ENCODE measurements at regions of chr17 and their contacts with region 1.

Region 1: GRCh38 chr17:58006924-58007780 is at the start of gene SRSF1:
- DNase-seq: peak; percentile 97
- H3K4me3 Mint-ChIP-seq: peak within 1 kb of the TSS; percentile 99
- H3K27ac Mint-ChIP-seq: peak within 1 kb of the TSS; percentile 99
- H3K4me1 Mint-ChIP-seq: peaks cover 61% of the 10 kb centered on the region
- H3K27me3 Mint-ChIP-seq: no peaks in the 10 kb centered on the region
- total RNA-seq, gene SRSF1: 491 and 498 TPM in 2 replicates

Region 2: GRCh38 chr17:56913864-56914640 is 1093.1 kb before region 1 on chr17 and contains the start of gene TRIM25:
- intact Hi-C with region 1: loop called (anchors 5 kb)
- DNase-seq: peak; percentile 76
- H3K4me3 Mint-ChIP-seq: peak within 1 kb of the TSS; percentile 93
- H3K27ac Mint-ChIP-seq: peak within 1 kb of the TSS; percentile 95
- H3K4me1 Mint-ChIP-seq: peaks cover 65% of the 10 kb centered on the region
- H3K27me3 Mint-ChIP-seq: peaks cover 2% of the 10 kb centered on the region
- total RNA-seq, gene TRIM25: 86.9 and 98.2 TPM in 2 replicates

Region 3: GRCh38 chr17:57861000-57861789 is 146.0 kb before region 1 on chr17:
- intact Hi-C with region 1: no loop called
- DNase-seq: peak; percentile 7
- H3K4me3 Mint-ChIP-seq: peak overlapping the region; percentile 73
- H3K27ac Mint-ChIP-seq: peak overlapping the region; percentile 40
- H3K4me1 Mint-ChIP-seq: peaks cover 10% of the 10 kb centered on the region
- H3K27me3 Mint-ChIP-seq: peaks cover 39% of the 10 kb centered on the region

Region 4: GRCh38 chr17:57955183-57955931 is 51.8 kb before region 1 on chr17 and contains the start of gene CUEDC1:
- intact Hi-C with region 1: no loop called
- DNase-seq: peak; percentile 59
- H3K4me3 Mint-ChIP-seq: peak within 1 kb of the TSS; percentile 45
- H3K27ac Mint-ChIP-seq: no peak within 1 kb of the TSS
- H3K4me1 Mint-ChIP-seq: peaks cover 28% of the 10 kb centered on the region
- H3K27me3 Mint-ChIP-seq: peaks cover 55% of the 10 kb centered on the region
- total RNA-seq, gene CUEDC1: 0.37 TPM in 1 of 2 replicates, not detected in the other

Region 5: DNA sequence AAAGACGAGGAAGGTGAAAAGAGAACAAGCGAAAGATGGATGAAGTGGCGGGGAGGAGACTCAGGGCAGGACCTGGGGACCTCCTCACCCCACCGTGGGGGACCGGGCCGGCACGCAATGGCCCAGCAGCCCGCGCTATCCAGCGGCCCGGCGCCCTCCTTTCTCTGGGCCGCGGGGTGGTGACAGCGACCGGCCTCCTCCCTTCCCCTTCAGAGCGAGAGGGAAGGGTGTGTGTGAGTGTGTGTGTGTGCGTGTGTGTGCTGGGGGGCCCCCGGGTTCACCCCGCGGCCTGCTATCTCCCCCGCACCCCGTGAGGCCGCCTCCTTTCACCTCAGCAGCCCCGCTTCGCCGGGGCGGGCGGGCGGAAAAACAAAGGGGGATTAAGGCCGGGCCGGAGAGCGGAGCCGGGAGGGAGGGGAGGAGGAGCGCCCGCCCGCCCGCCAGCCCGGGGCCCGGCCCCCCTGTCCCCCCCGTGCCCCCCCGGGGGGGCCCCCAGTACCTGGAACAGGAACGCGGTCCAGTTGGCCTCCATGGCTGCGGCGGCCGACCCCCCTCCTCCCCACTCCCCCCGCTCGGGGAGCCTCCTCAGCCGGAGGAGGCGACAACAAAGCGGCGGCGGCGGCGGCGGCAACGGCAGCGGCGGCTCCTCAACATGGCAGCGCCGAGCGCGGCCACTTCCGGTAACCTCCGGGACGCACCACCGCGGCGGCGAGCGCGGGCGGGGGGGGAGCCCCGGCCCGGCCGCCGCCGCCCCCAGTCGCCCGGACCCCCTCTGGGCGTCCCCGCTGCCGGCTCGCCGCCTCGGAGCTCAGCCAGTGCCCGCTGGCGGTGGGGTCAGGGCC is 19.4 kb before region 1 on chr17 and contains the start of gene VEZF1:
- intact Hi-C with region 1: loop called (anchors 1 kb)
- DNase-seq: peak; percentile 72
- H3K4me3 Mint-ChIP-seq: peak within 1 kb of the TSS; percentile 93
- H3K27ac Mint-ChIP-seq: peak within 1 kb of the TSS; percentile 93
- H3K4me1 Mint-ChIP-seq: peaks cover 64% of the 10 kb centered on the region
- H3K27me3 Mint-ChIP-seq: no peaks in the 10 kb centered on the region
- total RNA-seq, gene VEZF1: 37.7 and 41.2 TPM in 2 replicates

Region 6: DNA sequence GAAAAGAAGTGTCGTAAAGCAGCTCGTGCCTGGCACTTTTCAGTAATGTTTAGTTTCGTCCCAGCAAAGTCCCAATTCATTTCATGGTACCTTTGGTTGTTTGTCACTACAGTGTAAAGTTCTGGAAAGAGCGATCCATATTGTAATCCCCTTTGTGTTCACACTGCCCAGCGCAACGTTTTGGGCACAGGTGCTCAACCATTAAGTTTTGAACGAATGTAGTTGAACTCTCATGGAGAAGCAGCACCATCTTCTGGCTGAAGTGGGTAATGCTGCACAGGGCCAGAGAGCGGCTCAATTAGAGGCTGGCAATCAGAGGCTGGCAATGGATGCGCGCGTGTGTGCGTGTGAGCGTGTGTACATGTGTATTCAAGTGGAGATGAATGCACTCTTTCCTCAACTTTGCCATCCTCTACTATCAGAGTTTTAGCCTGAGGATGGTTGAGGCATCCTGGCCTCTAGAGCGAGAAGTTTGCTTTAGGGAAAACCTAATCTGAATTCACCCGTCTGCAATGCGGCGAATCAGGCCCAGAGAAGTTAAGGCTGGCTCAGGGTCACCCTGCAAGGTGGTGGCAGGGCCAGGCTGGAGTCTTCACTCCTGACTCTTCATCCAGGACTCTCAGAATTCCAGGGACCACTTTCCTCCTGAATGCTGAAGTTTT is 105.9 kb after region 1 on chr17:
- intact Hi-C with region 1: loop called (anchors 2 kb)
- DNase-seq: peak; percentile 70
- H3K4me3 Mint-ChIP-seq: no peak overlapping the region
- H3K27ac Mint-ChIP-seq: no peak overlapping the region
- H3K4me1 Mint-ChIP-seq: peaks cover 6% of the 10 kb centered on the region
- H3K27me3 Mint-ChIP-seq: peaks cover 11% of the 10 kb centered on the region

Region 7: GRCh38 chr17:58219001-58219788 is 212.0 kb after region 1 on chr17 and contains the start of gene MKS1:
- intact Hi-C with region 1: loop called (anchors 2 kb)
- DNase-seq: peak; percentile 94
- H3K4me3 Mint-ChIP-seq: peak within 1 kb of the TSS; percentile 92
- H3K27ac Mint-ChIP-seq: peak within 1 kb of the TSS; percentile 96
- H3K4me1 Mint-ChIP-seq: peaks cover 26% of the 10 kb centered on the region
- H3K27me3 Mint-ChIP-seq: peaks cover 11% of the 10 kb centered on the region
- total RNA-seq, gene MKS1: 18.8 and 23.3 TPM in 2 replicates